ENCODE measurements at regions of chr10 and their contacts with region 1.

Region 1: DNA sequence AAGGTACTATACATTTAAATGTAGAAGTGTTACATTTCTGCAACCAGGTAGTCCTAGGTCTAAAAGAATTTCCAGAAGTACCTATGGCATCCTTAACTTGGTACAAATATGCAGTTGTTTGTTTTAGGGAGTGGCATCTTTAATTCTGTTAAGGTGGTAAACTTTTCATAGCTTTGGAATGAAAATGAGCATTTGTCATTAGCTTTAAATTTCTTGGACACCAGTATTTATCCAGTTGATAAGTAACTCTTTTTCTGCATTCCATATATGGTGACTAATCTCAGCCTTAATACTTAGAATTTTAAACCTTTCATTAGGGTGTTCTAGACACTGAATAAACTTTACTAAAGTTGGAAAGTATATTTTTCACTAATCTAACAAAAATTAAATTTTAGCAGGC is 10.8 kb downstream of the SLF2 start:
- DNase-seq: no peak
- ATAC-seq: peak; percentile 66
- H3K4me3 ChIP-seq: no peak overlapping the region
- H3K27ac ChIP-seq: no peak overlapping the region
- H3K4me1 ChIP-seq: peaks cover 4% of the 10 kb centered on the region
- H3K27me3 ChIP-seq: no peaks in the 10 kb centered on the region
- CTCF ChIP-seq: no peak
- POLR2A ChIP-seq: no peak
- RAD21 ChIP-seq: no peak

Region 2: GRCh38 chr10:100209303-100209702 is 714.3 kb before region 1 on chr10:
- CTCF ChIA-PET with region 1: no interaction called
- POLR2A ChIA-PET with region 1: no interaction called
- dilution Hi-C with region 1: no loop called
- in situ Hi-C with region 1: no loop called
- intact Hi-C with region 1: loop called (anchors 5 kb)
- DNase-seq: peak; percentile 13
- ATAC-seq: peak; percentile 53
- H3K4me3 ChIP-seq: no peak overlapping the region
- H3K27ac ChIP-seq: peak overlapping the region; percentile 27; the same call in 1 of the 2 replicates
- H3K4me1 ChIP-seq: no peaks in the 10 kb centered on the region; the same call in 1 of the 2 replicates
- H3K27me3 ChIP-seq: no peaks in the 10 kb centered on the region
- CTCF ChIP-seq: no peak
- POLR2A ChIP-seq: no peak
- RAD21 ChIP-seq: no peak

Region 3: DNA sequence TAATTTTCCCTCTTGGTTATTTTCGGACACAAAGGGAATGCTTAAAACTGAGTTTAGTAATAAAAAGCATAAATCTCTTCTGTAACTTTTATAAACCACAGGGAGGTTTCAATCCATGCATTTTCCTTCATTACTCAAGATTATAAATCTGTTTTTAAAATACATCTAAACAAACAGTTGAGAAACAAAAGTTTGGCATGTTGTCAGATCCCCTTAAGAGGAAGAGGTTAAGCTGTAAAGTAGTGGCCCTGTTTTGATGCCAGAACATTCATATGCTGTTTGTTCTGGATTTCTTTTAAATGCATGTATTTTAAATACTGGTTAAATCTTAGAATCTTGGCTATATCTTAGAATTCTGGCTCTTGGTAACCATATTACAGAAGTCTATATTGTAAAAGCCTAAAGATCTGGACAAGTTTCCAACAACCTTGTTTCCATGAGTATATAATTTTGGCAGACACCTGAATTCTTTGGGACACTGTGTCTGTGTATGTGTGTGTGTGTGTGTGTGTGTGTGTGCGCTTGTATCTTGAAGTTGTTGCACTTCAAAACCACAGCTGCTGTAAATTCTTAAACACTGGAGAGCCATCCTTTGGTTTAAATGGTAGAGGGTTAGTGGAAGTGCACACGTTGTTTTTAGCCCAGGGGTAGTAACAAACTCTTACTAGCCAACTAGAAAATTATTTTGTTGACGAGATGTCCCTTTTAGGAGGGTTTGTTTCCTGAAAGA is 38.9 kb after region 1 on chr10:
- CTCF ChIA-PET with region 1: no interaction called
- POLR2A ChIA-PET with region 1: no interaction called
- dilution Hi-C with region 1: no loop called
- in situ Hi-C with region 1: no loop called
- intact Hi-C with region 1: loop called (anchors 5 kb)
- DNase-seq: no peak
- ATAC-seq: no peak
- H3K4me3 ChIP-seq: no peak overlapping the region
- H3K27ac ChIP-seq: no peak overlapping the region
- H3K4me1 ChIP-seq: no peaks in the 10 kb centered on the region
- H3K27me3 ChIP-seq: no peaks in the 10 kb centered on the region
- CTCF ChIP-seq: no peak
- POLR2A ChIP-seq: no peak
- RAD21 ChIP-seq: no peak